RWPE1 (cell line): ENCODE measurements at regions of chr11 and their contacts with region 1.

Region 1: GRCh38 chr11:117107701-117108590 is 9.7 kb upstream of the SIK3 start:
- DNase-seq: no peak
- H3K27ac ChIP-seq: peak overlapping the region; percentile 50
- CTCF ChIP-seq: no peak

Region 2: GRCh38 chr11:116732271-116733042 is 375.5 kb before region 1 on chr11:
- CTCF ChIA-PET with region 1: interaction called, 10 read pairs
- POLR2A ChIA-PET with region 1: no interaction called
- DNase-seq: peak; percentile 82
- H3K27ac ChIP-seq: no peak overlapping the region
- CTCF ChIP-seq: peak; percentile 83

Region 3: GRCh38 chr11:116879800-116880625 is 227.9 kb before region 1 on chr11:
- CTCF ChIA-PET with region 1: interaction called, 15 read pairs
- POLR2A ChIA-PET with region 1: no interaction called
- DNase-seq: peak; percentile 49
- H3K27ac ChIP-seq: no peak overlapping the region
- CTCF ChIP-seq: peak; percentile 72